ENCODE measurements at regions of chr18 and their contacts with region 1.

Region 1: GRCh38 chr18:31954349-31954748 is 11.4 kb upstream of the TRAPPC8 start:
- DNase-seq: no peak
- ATAC-seq: no peak
- H3K4me3 ChIP-seq: no peak overlapping the region
- H3K27ac ChIP-seq: no peak overlapping the region
- H3K4me1 ChIP-seq: peaks cover 5 to 10% of the 10 kb centered on the region in 2 experiments; a peak in 3 of 4 replicates
- H3K27me3 ChIP-seq: no peaks in the 10 kb centered on the region
- CTCF ChIP-seq: no peak
- POLR2A ChIP-seq: no peak
- RAD21 ChIP-seq: no peak

Region 2: DNA sequence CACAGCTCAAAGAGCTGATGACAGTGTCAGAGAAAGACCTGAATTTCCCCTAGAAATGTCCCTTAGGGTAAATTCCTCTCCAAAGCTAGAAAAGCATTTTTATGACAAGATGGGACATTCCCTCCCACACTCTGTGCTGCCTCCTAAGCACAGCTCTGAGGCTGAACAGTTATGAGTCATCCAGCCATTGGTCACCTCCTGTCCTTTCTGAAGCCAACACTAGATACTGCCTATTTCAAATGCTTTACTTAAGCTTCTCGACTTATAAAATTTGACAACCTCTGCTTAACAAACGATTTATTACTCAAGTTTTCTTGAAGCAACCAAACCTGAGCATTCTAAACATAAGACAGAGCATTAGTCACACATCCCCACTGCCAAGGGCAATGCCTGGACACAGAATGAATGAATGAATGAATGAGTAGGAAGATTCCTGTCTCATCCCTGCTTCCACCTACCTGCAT is 305.4 kb before region 1 on chr18:
- CTCF ChIA-PET with region 1: no interaction called
- POLR2A ChIA-PET with region 1: no interaction called
- RAD21 ChIA-PET with region 1: no interaction called
- intact Hi-C with region 1: no loop called
- DNase-seq: peak; percentile 78
- ATAC-seq: peak; percentile 100
- H3K4me3 ChIP-seq: peak overlapping the region in 1 of 2 experiments; percentile 8; a peak in 2 of 4 replicates
- H3K27ac ChIP-seq: peak overlapping the region; percentile 7; the same call in 1 of the 2 replicates
- H3K4me1 ChIP-seq: peaks cover 14 to 35% of the 10 kb centered on the region in 2 experiments
- H3K27me3 ChIP-seq: no peaks in the 10 kb centered on the region
- CTCF ChIP-seq: no peak
- POLR2A ChIP-seq: no peak
- RAD21 ChIP-seq: 0 out of 2 replicates have a peak, but pooled peaks have one; percentile 12

Region 3: DNA sequence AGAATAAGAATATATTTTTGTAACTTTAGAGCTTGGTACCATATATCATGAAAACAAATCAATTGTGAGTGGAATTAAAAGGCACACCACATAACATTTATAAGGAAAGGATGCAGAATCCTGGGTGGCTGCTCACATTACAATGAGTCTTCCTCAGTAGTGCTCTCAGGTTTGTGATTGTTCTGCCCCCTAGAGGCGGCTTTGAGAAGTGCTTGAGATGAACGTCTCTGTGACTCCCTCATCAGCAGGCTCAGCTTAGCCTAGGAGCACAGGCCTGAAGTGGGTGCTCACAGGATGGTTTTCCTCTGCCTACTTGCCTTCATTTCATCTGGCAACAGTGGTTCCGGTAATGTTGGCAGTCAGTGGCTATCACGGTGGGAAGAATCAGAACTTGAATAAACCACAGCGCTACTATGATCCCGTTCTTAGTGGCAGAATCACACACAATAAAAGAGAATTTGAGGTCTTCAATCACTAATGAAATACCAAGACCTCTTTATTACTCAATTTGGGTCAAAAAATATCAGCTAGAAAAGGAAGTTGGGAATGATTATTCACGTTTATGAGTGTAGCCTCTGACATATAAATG is 231.9 kb before region 1 on chr18:
- CTCF ChIA-PET with region 1: no interaction called
- POLR2A ChIA-PET with region 1: no interaction called
- RAD21 ChIA-PET with region 1: no interaction called
- intact Hi-C with region 1: loop called (anchors 10 kb)
- DNase-seq: peak; percentile 66
- ATAC-seq: peak; percentile 100
- H3K4me3 ChIP-seq: no peak overlapping the region
- H3K27ac ChIP-seq: no peak overlapping the region
- H3K4me1 ChIP-seq: no peaks in the 10 kb centered on the region
- H3K27me3 ChIP-seq: no peaks in the 10 kb centered on the region
- CTCF ChIP-seq: peak; percentile 68 to 91 (median 89); a peak in 5 of 6 replicates
- POLR2A ChIP-seq: no peak
- RAD21 ChIP-seq: peak; percentile 82

Region 4: DNA sequence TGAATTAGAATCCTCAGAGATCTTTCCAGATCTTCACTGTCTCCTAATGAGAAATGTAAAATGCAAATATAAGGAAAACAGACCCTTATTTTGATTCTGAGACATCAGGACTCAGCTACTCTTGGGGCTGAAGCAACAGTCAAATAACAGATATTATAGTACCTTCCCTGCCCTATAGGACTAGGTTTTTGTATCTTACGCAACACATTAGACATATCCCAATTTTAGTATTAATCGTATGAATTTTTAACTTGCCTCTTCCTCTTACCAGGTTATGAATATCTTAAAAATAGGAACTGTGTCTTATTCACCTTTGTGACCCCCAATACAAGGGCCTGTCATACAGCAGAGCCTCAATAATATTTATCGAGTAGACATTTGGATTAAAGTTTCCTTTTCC is 181.7 kb before region 1 on chr18:
- CTCF ChIA-PET with region 1: no interaction called
- POLR2A ChIA-PET with region 1: no interaction called
- RAD21 ChIA-PET with region 1: no interaction called
- intact Hi-C with region 1: no loop called
- DNase-seq: no peak
- ATAC-seq: no peak
- H3K4me3 ChIP-seq: no peak overlapping the region
- H3K27ac ChIP-seq: no peak overlapping the region
- H3K4me1 ChIP-seq: no peaks in the 10 kb centered on the region
- H3K27me3 ChIP-seq: no peaks in the 10 kb centered on the region
- CTCF ChIP-seq: no peak
- POLR2A ChIP-seq: no peak
- RAD21 ChIP-seq: no peak

Region 5: DNA sequence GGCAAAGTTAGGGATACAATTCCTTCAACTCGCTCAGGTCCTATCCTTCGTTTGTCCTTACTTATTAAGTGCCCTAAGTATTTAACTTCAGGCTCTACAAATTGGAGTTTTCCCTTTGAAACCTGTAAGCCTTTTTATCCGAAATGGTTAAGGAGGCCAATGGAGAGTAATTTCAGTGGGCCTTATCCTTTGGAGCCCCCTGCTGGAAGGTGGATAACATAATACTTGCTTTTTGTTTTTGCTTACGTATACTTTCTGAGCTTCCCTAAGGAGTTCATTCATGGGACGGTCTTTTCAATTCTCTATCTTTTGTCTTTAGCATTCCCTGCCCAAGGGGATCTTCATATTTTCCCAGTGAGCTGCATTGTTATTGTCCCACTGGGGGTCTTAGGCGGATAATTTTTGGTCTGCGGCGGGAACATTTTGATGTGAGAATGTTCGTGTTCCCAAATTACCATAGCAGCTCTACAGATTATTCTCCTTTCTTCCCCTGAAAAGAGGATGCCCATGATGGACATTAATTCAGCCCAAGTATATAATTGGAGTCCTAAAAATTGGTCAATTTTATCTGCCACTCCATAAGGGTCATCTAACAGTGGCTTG is 23.0 kb after region 1 on chr18:
- CTCF ChIA-PET with region 1: no interaction called
- POLR2A ChIA-PET with region 1: no interaction called
- RAD21 ChIA-PET with region 1: no interaction called
- intact Hi-C with region 1: loop called (anchors 2 kb)
- DNase-seq: peak; percentile 54
- ATAC-seq: peak; percentile 70; the same call in 1 of the 2 replicates
- H3K4me3 ChIP-seq: no peak overlapping the region
- H3K27ac ChIP-seq: no peak overlapping the region
- H3K4me1 ChIP-seq: no peaks in the 10 kb centered on the region
- H3K27me3 ChIP-seq: no peaks in the 10 kb centered on the region
- CTCF ChIP-seq: peak; percentile 43 to 68 (median 57); a peak in 5 of 6 replicates
- POLR2A ChIP-seq: no peak
- RAD21 ChIP-seq: peak; percentile 69

Region 6: GRCh38 chr18:32530947-32531651 is 576.8 kb after region 1 on chr18:
- CTCF ChIA-PET with region 1: no interaction called
- POLR2A ChIA-PET with region 1: no interaction called
- RAD21 ChIA-PET with region 1: no interaction called
- intact Hi-C with region 1: no loop called
- DNase-seq: no peak
- ATAC-seq: no peak
- H3K4me3 ChIP-seq: no peak overlapping the region
- H3K27ac ChIP-seq: no peak overlapping the region
- H3K4me1 ChIP-seq: no peaks in the 10 kb centered on the region
- H3K27me3 ChIP-seq: no peaks in the 10 kb centered on the region
- CTCF ChIP-seq: no peak
- POLR2A ChIP-seq: no peak
- RAD21 ChIP-seq: no peak